K562 (cell line): ENCODE measurements at regions of chr16 and their contacts with region 1.

Region 1: DNA sequence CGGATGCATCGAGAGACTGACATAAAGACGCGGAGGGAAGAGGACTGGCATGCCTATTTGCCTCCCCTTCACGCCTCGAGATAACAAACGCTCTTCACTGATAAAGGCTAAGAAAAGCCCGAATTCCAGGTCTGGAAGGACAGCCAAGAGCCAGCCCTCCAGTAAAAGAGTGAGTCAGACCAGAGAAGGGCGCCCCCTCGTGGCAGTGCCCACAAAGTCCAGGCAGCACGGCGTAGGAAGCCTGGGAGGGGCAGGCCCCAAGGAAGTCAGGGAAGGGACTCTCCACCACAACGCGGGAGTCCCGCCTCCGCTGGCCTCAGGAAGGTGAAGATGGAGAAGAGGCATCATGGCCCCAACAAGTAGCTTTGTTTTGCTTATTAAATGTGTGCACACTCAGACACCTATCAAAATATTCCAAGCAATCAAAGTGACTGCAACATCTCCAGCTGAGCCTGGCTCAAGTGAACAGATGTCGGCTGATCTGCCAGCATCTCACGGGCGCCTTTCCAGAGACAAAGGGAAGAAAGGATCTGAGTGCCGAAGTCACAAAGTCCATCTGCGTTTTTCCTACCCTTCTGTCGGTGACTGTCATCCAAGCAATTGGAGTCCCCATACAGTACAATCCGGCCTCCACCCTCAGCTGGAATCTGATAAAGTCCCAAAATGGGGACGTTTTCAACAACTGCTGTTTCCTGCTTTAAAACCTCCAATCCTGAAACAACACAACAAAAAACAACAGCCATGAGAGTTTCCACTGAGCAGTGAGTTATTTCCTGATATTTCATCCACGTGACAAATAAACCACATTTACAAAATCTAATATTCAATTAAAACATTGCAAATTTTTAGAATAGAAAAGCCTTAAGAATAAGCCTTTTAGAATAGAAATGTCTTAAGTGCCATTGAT is 20.4 kb upstream of the SLC38A8 start:
- DNase-seq: peak; percentile 85 to 90 (median 86)
- ATAC-seq: peak; percentile 99
- H3K4me3 ChIP-seq: no peak overlapping the region
- H3K27ac ChIP-seq: no peak overlapping the region
- H3K4me1 ChIP-seq: peaks cover 0 to 6% of the 10 kb centered on the region in 2 experiments; a peak in 1 of 5 replicates
- H3K27me3 ChIP-seq: no peaks in the 10 kb centered on the region
- CTCF ChIP-seq: peak; percentile 85 to 99 (median 92)
- EP300 ChIP-seq: no peak
- POLR2A ChIP-seq: no peak
- RAD21 ChIP-seq: peak; percentile 64 to 84

Region 2: DNA sequence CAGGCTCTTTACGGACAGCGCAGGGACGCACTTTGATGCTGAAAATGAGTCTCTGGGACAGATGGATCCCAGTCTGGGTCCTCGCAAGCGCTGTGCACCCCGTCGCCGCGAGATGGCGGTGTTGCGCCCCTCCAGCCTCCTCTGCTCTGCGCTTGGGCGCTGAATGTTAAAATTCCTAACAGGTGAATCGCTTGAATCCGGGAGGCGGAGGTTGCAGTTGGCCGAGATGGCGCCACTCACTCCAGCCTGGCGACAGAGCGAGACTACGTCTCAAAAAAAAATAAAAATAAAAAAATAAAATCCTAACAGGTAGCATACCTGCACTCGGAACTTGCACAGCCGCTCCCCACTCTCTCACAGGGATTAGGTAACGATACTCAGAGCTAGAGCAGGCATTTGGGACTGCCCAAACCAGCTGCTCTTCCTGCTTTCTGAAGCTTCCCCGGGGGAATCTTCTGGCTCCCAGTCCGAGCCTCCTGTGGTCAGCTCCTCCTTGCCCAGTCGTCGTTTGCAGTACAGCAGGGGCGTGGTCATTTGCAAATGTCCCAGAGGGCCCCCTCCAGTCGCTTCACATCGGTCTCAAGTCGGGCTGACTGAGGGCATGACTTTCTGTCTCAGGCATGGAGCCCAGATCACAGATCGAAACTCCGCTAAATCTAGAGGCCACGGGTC is 136.1 kb before region 1 on chr16:
- CTCF ChIA-PET with region 1: interaction called, 7 read pairs
- POLR2A ChIA-PET with region 1: no interaction called
- in situ Hi-C with region 1: no loop called
- intact Hi-C with region 1: loop called (anchors 1 kb)
- DNase-seq: peak; percentile 82 to 91 (median 88)
- ATAC-seq: peak; percentile 94
- H3K4me3 ChIP-seq: no peak overlapping the region
- H3K27ac ChIP-seq: no peak overlapping the region
- H3K4me1 ChIP-seq: peaks cover 0 to 31% of the 10 kb centered on the region in 2 experiments; a peak in 2 of 5 replicates
- H3K27me3 ChIP-seq: peaks cover 53 to 93% of the 10 kb centered on the region in 2 experiments
- CTCF ChIP-seq: peak; percentile 93 to 96 (median 95)
- EP300 ChIP-seq: no peak
- POLR2A ChIP-seq: no peak
- RAD21 ChIP-seq: peak; percentile 53 to 80

Region 3: DNA sequence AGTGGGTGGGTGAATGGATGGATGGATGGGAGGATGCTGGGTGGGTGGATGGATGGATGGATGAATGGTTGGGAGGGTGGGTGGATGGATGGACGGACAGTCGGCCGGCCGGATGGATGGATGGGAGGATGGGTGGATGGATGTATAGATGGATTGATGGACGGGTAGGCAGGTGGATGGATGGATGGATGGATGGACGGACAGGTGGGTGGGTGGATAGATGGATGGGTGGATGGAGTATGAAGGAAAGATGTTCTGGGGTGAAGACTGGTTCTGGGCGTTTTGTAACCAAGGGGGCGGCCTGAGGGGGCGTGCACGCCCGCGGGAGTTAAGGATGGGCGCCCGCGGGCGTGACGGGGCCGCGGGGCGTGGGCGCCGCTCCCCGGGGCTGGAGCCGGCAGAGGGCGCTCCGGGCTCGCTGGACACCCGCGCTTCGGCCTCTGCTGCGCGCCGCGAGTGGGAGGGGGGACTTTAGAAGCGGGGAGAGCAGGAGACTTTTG is 95.1 kb before region 1 on chr16 and contains the start of gene NECAB2:
- CTCF ChIA-PET with region 1: interaction called, 37 read pairs
- POLR2A ChIA-PET with region 1: interaction called, 4 read pairs
- in situ Hi-C with region 1: no loop called
- intact Hi-C with region 1: loop called (anchors 1 kb)
- DNase-seq: peak; percentile 78 to 98 (median 96)
- ATAC-seq: peak; percentile 91
- H3K4me3 ChIP-seq: peak within 1 kb of the TSS; percentile 33
- H3K27ac ChIP-seq: no peak within 1 kb of the TSS
- H3K4me1 ChIP-seq: peaks cover 0 to 31% of the 10 kb centered on the region in 2 experiments; a peak in 1 of 5 replicates
- H3K27me3 ChIP-seq: peaks cover 18 to 32% of the 10 kb centered on the region in 2 experiments; a peak in 3 of 5 replicates
- CTCF ChIP-seq: peak; percentile 57 to 94 (median 82)
- EP300 ChIP-seq: no peak
- POLR2A ChIP-seq: no peak
- RAD21 ChIP-seq: peak; percentile 86 to 90
- polyA plus RNA-seq, gene NECAB2: not detected